Left ventricle myocardium superior (tissue), 1 donor: ENCODE measurements at regions of chr12 and their contacts with region 1.

Region 1: DNA sequence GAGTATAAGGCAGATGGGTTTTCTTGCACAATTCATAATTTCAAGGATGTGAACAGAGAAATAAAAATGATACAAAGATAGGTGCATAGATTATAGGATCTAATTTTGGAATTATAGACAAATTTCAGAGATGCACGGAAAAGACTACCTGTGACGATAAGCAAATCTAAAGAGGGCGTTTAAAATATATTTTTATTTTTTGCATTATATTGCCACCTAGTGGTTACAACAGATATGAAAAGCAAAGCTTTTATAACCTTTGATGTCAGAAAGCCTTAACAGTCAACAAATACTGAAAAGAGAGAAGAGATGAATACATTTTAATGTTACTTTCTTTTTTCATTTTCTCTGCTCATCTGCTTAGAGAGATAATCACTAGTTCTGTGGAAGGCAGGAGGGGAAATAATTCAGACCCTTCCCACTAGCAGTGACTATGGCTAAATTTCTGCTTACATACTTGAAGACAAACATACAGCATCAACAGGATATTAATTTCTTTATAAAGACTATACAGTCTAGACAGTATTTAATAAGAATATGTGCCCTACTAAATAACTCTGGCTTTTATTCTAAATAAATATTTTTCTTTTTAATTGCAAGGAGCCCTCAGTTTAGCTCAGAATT is 46.3 kb downstream of the NTS start:
- DNase-seq: no peak
- ATAC-seq: no peak

Region 2: GRCh38 chr12:85468356-85469157 is 451.9 kb before region 1 on chr12:
- intact Hi-C with region 1: loop called (anchors 5 kb)
- DNase-seq: peak; percentile 23
- ATAC-seq: peak; percentile 57